ENCODE measurements at regions of chr13 and their contacts with region 1.

Region 1: DNA sequence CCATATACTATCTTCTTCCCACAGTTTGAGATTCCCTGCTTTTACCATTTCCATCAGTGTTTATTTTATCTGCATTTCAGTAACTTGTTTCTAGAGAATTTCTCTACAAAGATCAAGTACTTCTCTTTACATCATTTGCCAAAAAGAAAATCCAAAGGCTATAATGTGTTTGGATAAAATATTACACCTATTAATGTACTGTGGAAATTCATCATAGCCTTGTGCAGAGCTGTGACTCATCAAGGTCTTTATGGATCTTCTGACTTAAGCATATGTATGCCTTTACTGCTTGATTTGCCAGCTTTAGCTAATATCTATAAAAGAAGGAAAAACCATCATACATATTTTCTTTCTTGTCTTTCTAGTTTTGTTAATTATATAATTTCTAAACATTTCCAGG is 9.6 kb upstream of the HTR2A start:
- DNase-seq: no peak
- ATAC-seq: no peak
- H3K4me3 Mint-ChIP-seq: no peak overlapping the region
- H3K27ac Mint-ChIP-seq: no peak overlapping the region
- H3K4me1 Mint-ChIP-seq: no peaks in the 10 kb centered on the region
- H3K27me3 Mint-ChIP-seq: peaks cover 10% of the 10 kb centered on the region

Region 2: GRCh38 chr13:46893798-46894560 is 12.4 kb before region 1 on chr13:
- CTCF ChIA-PET with region 1: interaction called, 10 read pairs
- POLR2A ChIA-PET with region 1: no interaction called
- intact Hi-C with region 1: no loop called
- DNase-seq: peak; percentile 83
- ATAC-seq: peak; percentile 95
- H3K4me3 Mint-ChIP-seq: peak overlapping the region; percentile 60
- H3K27ac Mint-ChIP-seq: no peak overlapping the region
- H3K4me1 Mint-ChIP-seq: peaks cover 11% of the 10 kb centered on the region
- H3K27me3 Mint-ChIP-seq: peaks cover 48% of the 10 kb centered on the region

Measured in activated CD4-positive, alpha-beta T cell treated with anti-CD3 and anti-CD28 coated beads for 36 hours (primary cell).